ENCODE measurements at regions of chr9 and their contacts with region 1.

Region 1: DNA sequence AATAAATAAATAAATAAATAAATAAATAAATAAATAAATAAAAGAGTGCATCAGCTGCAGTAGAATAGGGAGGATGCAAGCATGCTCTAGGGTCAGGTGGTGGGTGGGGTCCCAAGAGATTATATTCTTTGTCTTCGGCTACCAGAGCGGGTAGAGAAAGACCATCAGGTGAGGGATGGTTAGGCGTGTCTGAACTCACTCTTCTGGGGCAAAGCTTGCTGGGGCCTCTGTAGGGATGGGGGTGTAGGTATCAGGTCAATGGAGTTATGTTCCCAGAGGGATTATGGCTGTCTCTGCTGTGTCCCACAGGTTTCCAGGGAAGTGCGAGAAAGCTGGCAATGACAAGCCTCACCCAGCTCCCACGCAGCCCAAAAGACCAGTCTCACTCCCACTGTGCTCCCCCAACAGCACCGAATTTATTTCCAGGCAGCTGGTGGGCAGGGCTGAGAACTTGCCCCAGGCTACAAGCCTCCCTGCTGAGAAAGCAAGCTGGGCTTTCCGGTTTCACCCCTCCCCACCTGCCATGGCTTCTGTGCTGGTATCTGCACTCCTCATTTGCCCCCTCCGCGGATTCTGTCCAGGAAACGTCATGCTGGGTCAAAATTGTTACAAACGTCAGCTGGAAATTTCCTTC is 180.8 kb downstream of the LURAP1L start:
- DNase-seq: no peak
- ATAC-seq: no peak
- H3K4me3 ChIP-seq: no peak overlapping the region
- H3K27ac ChIP-seq: no peak overlapping the region
- H3K4me1 ChIP-seq: no peaks in the 10 kb centered on the region
- H3K27me3 ChIP-seq: no peaks in the 10 kb centered on the region
- CTCF ChIP-seq: no peak
- EP300 ChIP-seq: no peak
- POLR2A ChIP-seq: no peak
- RAD21 ChIP-seq: no peak

Region 2: GRCh38 chr9:12884737-12885414 is 70.8 kb before region 1 on chr9:
- CTCF ChIA-PET with region 1: no interaction called
- POLR2A ChIA-PET with region 1: no interaction called
- RAD21 ChIA-PET with region 1: no interaction called
- SMC1A ChIA-PET with region 1: no interaction called
- in situ Hi-C with region 1: no loop called
- intact Hi-C with region 1: loop called (anchors 10 kb)
- DNase-seq: no peak
- ATAC-seq: peak; percentile 38; the same call in 2 of the 3 replicates
- H3K4me3 ChIP-seq: no peak overlapping the region
- H3K27ac ChIP-seq: no peak overlapping the region
- H3K4me1 ChIP-seq: no peaks in the 10 kb centered on the region
- H3K27me3 ChIP-seq: no peaks in the 10 kb centered on the region
- CTCF ChIP-seq: peak in 2 of 3 experiments; percentile 6 to 40; a peak in 3 of 6 replicates
- EP300 ChIP-seq: no peak
- POLR2A ChIP-seq: no peak
- RAD21 ChIP-seq: peak; percentile 39; the same call in 1 of the 2 replicates

Measured in GM12878 (cell line).